ENCODE measurements at regions of chr6 and their contacts with region 1.

Region 1: GRCh38 chr6:25717866-25718740 is 36.4 kb upstream of the SLC17A4 start:
- DNase-seq: peak in 3 of 14 experiments; percentile 22 to 39 (median 35)
- ATAC-seq: no peak
- H3K4me3 ChIP-seq: no peak overlapping the region
- H3K4me3 Mint-ChIP-seq: no peak overlapping the region
- H3K27ac ChIP-seq: no peak overlapping the region
- H3K27ac Mint-ChIP-seq: no peak overlapping the region
- H3K4me1 ChIP-seq: no peaks in the 10 kb centered on the region
- H3K4me1 Mint-ChIP-seq: no peaks in the 10 kb centered on the region
- H3K27me3 ChIP-seq: peaks cover 0 to 5% of the 10 kb centered on the region in 2 experiments
- H3K27me3 Mint-ChIP-seq: peaks cover 15% of the 10 kb centered on the region
- CTCF ChIP-seq: peak; percentile 59

Region 2: GRCh38 chr6:25874822-25875562 is 156.9 kb after region 1 on chr6:
- CTCF ChIA-PET with region 1: no interaction called
- POLR2A ChIA-PET with region 1: no interaction called
- intact Hi-C with region 1: no loop called
- DNase-seq: peak in 3 of 14 experiments; percentile 23 to 65 (median 26)
- ATAC-seq: peak; percentile 51
- H3K4me3 ChIP-seq: no peak overlapping the region
- H3K4me3 Mint-ChIP-seq: no peak overlapping the region
- H3K27ac ChIP-seq: no peak overlapping the region
- H3K27ac Mint-ChIP-seq: no peak overlapping the region
- H3K4me1 ChIP-seq: peaks cover 29% of the 10 kb centered on the region
- H3K4me1 Mint-ChIP-seq: peaks cover 36% of the 10 kb centered on the region
- H3K27me3 ChIP-seq: no peaks in the 10 kb centered on the region
- H3K27me3 Mint-ChIP-seq: no peaks in the 10 kb centered on the region
- CTCF ChIP-seq: no peak

Region 3: DNA sequence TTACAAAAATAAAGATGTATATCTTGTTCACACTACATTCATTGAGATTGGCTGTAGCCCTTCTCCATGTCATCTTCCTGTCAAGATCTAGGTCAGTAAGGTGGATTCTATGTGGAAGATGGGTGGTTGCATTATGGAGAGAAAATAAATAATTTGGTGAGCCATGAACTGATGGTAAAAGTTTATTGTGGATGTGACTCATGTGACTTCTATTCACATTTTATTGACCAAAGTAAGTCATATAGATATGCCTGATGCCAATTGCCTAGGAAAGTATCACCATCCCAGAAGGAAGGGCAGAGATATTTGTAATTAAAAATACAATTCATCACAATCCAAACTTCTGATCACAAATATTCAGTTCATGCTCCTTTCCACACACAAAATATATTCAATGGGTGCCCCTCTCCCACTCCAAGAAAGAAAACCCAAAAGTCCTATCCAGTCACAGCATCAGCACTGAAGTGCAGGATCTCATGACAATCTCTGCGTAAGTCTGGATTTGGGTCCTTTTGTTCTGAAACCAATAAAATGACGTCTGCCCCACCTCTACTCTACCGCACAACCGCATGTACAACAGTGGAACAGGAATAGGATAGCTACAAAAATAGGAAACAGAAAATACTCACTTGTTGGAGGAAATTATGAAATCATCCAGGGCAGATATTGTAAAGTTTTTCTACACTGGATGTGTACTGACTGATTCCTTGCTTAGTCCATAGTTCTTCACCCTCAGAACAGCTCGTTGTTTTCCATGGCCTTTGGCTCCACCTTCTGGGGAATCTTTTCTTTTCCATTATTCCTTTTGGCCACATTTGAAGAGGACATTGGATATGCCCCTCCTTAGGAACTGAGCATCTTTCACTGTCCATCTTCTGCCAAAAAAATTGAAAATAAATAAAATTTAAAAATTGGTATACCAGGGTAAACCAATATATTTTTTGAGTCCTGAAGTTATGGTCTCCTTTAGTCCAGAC is 172.1 kb after region 1 on chr6:
- CTCF ChIA-PET with region 1: interaction called, 4 read pairs
- POLR2A ChIA-PET with region 1: no interaction called
- intact Hi-C with region 1: loop called (anchors 1 to 2 kb)
- DNase-seq: peak in 5 of 14 experiments; percentile 1 to 59 (median 36)
- ATAC-seq: no peak
- H3K4me3 ChIP-seq: no peak overlapping the region
- H3K4me3 Mint-ChIP-seq: no peak overlapping the region
- H3K27ac ChIP-seq: no peak overlapping the region
- H3K27ac Mint-ChIP-seq: no peak overlapping the region
- H3K4me1 ChIP-seq: no peaks in the 10 kb centered on the region
- H3K4me1 Mint-ChIP-seq: no peaks in the 10 kb centered on the region
- H3K27me3 ChIP-seq: no peaks in the 10 kb centered on the region
- H3K27me3 Mint-ChIP-seq: peaks cover 3% of the 10 kb centered on the region
- CTCF ChIP-seq: peak; percentile 39